A673 (cell line): ENCODE measurements at regions of chr19 and their contacts with region 1.

Region 1: GRCh38 chr19:47790398-47790814 is 11.9 kb downstream of the SELENOW start:
- DNase-seq: peak; percentile 83
- H3K4me3 ChIP-seq: no peak overlapping the region
- H3K27ac ChIP-seq: no peak overlapping the region
- H3K4me1 ChIP-seq: no peaks in the 10 kb centered on the region
- H3K27me3 ChIP-seq: no peaks in the 10 kb centered on the region
- CTCF ChIP-seq: peak; percentile 95

Region 2: DNA sequence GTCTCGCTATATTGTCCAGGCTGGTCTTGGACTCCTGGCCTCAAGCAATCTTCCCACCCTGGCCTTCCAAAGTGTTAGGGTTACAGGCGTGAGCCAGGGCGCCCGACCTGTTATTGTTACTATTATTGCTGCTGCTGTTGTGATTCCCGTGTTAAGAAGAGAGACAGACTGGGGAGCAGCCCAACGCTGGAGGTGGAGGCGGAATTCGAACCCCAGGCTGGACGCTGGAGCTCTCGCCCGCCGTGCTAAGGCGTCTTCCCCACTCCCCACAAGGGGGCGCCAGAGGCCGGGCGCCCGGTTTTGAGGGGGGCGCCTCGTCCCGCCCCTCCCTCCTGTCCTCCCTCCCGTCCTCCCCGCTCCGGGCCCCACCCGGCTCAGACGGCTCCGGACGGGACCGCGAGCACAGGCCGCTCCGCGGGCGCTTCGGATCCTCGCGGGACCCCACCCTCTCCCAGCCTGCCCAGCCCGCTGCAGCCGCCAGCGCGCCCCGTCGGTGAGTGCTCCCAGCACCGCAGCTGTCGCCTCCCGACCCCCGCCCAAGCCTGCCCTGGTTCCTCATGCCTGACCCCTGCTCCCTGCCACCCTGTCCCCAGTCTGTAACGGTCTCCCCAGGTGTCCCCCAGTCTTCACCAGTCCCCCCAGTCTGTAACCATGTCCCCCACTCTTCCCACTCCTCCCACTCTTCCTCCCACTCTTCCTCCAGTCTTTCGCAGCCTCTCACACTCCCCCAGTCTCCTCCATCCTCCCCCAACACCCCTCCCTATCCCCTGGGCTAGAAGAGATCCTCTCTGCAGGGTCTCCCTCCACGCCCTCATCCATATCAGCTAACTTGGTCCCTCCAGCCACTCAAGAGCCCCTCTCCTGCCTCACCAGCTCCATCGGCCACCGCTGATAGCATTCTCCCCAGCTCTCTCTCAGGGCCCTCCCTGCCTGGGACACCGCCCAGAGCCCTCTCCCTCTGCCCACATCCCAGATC is 77.1 kb before region 1 on chr19 and contains the start of gene EHD2:
- CTCF ChIA-PET with region 1: no interaction called
- POLR2A ChIA-PET with region 1: no interaction called
- intact Hi-C with region 1: loop called (anchors 5 kb)
- DNase-seq: peak; percentile 69
- H3K4me3 ChIP-seq: peak within 1 kb of the TSS; percentile 46
- H3K27ac ChIP-seq: no peak within 1 kb of the TSS
- H3K4me1 ChIP-seq: no peaks in the 10 kb centered on the region
- H3K27me3 ChIP-seq: no peaks in the 10 kb centered on the region
- CTCF ChIP-seq: peak; percentile 89
- total RNA-seq, gene EHD2: 2.9 and 3.0 TPM in 2 replicates

Region 3: DNA sequence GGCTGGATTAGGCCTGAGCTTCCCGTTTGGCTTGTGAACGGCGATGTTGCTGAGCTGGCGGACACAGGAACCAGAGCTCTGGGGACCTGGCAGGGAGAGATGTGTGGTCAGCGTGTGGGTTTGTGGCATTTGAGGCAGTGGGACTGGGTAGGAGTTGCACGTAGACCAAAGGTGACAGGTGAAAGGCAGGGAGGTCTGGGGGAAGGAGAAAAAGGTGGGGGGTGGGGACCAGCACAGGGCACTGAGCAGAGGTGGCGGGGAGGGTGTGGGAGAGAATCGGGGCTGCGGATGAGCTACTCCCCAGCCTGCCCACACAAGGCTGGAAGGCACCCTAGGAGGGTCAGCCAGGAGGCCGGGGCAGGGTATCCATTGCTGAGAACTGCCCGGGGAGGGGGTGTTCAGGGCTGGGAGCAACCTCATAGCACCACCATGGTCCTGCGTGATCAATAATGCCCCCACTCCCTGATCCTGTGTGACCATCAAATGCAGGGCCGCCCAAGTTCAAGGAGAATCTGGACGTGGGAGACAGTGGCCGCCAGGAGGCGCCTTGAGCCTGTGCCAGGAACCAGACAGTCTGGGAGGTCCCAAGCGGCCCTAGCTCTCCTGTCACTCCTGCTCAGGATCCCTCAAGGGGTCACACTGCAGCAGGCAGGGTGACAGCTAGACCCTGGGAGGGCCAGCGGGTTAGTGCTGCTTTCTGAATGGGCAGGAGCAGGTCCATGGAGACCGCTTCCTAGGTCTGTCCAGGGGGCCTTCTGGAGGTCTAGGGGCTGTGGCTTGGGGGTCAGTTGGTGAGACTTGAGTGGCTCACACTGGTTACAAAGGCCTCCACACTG is 24.7 kb before region 1 on chr19:
- CTCF ChIA-PET with region 1: interaction called, 17 read pairs
- POLR2A ChIA-PET with region 1: no interaction called
- intact Hi-C with region 1: loop called (anchors 1 kb)
- DNase-seq: peak; percentile 71
- H3K4me3 ChIP-seq: no peak overlapping the region
- H3K27ac ChIP-seq: no peak overlapping the region
- H3K4me1 ChIP-seq: no peaks in the 10 kb centered on the region
- H3K27me3 ChIP-seq: no peaks in the 10 kb centered on the region
- CTCF ChIP-seq: peak; percentile 88

Region 4: GRCh38 chr19:47813304-47814004 is 23.0 kb after region 1 on chr19:
- CTCF ChIA-PET with region 1: interaction called, 14 read pairs
- POLR2A ChIA-PET with region 1: no interaction called
- intact Hi-C with region 1: no loop called
- DNase-seq: peak; percentile 82
- H3K4me3 ChIP-seq: no peak overlapping the region
- H3K27ac ChIP-seq: no peak overlapping the region
- H3K4me1 ChIP-seq: no peaks in the 10 kb centered on the region
- H3K27me3 ChIP-seq: no peaks in the 10 kb centered on the region
- CTCF ChIP-seq: peak; percentile 70